MCF 10A (cell line): ENCODE measurements at regions of chr7 and their contacts with region 1.

Region 1: DNA sequence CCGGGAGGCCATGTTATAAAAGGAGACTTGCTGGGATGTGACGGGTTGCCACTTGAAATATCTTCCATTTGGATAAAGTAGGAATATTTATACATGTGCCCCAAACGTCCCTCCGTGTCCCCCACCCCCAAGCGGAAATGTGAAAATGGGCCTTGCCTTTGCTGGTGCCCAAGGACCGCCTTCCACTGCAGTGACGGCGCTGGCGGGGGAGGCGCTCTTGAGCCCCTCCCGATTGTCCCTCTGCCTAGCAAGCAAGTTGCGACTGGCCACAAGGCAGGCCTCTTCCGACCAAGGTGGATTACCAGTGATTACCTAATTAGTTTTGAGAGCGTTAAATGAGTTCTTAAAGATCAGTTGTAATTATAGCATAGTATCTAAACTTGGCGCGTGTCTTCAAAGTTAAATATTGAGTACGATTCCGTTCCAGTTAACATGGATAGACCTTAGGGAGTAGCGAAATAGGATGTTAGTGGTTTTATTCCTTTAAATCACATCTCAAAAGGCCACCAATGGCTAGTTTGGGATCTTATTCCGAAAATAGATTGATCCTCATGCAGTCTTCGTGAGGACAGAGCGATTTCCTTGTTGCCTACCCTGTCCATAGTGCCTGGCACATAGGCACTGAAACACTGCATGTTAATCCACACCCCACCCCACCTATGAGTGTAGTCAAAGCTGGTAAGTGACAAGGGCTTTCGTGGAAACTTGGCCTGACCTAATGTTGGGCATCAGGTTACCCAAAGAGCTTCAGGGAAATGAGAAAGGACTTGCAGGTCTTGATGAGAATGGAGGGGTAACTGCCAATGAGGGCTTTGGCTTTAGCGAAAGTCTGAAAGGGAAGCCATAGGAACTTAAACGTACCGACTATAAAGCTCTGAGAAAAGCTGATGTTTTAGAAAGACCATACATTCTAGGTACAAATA is 1.1 kb downstream of the PPIA start:
- DNase-seq: peak; percentile 90
- H3K4me3 Mint-ChIP-seq: peak overlapping the region; percentile 87
- H3K27ac Mint-ChIP-seq: peak overlapping the region; percentile 98
- H3K4me1 Mint-ChIP-seq: peaks cover 6% of the 10 kb centered on the region
- H3K27me3 Mint-ChIP-seq: no peaks in the 10 kb centered on the region
- CTCF ChIP-seq: peak; percentile 42

Region 2: DNA sequence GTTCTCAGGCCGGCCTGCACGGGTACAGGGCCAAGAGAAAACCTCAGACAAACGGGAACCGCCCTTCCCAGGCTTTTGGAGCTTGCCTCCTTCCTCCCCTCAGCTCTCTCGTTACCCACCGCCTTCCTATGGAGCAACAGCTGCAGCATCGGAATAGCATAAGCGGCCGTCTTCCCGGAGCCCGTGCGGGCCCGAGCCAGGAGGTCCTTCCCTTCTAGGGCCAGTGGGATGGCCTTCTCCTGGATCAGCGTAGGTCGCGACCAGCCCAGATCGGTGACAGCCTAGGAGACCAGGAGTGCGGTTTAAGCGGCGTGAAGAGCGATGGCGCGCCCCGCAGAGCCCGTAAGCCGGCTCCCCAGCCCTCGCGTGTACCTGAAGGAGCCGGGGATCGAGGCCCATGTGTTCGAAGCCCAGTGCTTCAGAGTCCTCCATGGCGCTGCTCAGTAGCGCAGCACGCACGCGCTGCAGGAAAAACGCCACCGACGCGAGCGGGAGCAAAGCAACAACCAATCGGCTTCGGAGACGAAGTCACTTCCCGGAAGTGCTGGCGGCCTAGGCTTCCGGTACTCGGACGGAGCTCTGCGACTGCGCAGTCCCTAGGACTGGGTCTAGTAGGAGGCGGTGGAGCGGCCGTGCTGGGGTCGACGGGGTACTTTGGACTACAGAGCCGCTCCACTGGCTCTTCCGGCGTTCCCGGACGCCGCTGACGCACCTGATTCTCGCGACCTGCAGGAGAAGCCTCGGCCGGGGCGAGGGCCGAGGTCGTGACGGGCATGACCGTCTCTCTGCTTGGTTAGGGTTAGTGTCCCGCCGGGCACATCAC is 223.9 kb before region 1 on chr7 and contains the start of gene DDX56:
- CTCF ChIA-PET with region 1: interaction called, 3 read pairs
- POLR2A ChIA-PET with region 1: interaction called, 11 read pairs
- intact Hi-C with region 1: no loop called
- DNase-seq: peak; percentile 94
- H3K4me3 Mint-ChIP-seq: peak within 1 kb of the TSS; percentile 98
- H3K27ac Mint-ChIP-seq: peak within 1 kb of the TSS; percentile 95
- H3K4me1 Mint-ChIP-seq: peaks cover 21% of the 10 kb centered on the region
- H3K27me3 Mint-ChIP-seq: no peaks in the 10 kb centered on the region
- CTCF ChIP-seq: no peak
- total RNA-seq, gene DDX56: 104 and 105 TPM in 2 replicates

Region 3: DNA sequence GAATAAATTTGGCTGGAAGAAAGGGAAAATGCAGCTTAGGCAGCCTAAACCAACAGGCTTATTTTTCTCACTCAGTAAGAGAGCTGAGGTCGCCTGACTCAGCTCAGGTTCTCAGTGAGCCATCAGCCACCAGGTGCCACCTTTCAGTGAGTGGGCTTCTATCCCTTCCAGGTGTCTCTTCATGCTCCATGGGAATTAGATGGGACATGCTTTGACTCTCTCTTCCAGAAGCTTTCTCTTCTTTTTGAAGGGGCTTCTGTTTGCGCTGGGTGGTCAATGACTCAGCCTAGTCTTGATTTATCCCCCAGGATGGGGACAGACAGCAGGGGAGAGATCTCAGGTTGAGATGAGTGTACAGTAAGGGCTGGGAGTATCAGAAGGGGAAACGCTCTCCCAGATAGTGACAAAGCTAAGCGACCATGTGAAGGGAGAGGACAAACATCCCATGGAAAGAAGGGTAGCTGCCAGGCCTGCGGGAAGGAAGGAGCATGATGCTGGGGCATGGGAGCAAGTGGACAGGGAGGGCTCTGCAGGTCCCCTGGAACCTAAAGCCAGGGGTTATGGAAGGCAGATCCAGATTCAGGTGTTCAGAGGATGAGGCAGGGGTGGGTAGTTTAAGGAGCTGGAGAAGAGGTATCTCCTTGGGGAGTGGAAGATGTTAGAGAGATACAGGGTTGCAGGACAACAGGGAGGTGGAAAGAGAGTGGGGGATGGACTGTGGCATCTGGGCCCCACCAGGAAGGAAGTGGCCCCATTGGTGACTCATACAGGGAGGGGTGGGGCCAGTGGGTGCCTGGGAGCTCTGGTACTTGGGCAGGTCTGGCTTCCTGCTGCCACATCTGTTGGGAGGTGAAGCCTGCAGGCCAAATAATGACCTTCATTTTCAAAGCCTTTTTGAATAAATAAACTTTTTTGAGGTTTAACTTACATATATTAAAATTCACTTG is 158.7 kb before region 1 on chr7:
- CTCF ChIA-PET with region 1: interaction called, 3 read pairs
- POLR2A ChIA-PET with region 1: interaction called, 19 read pairs
- intact Hi-C with region 1: no loop called
- DNase-seq: peak; percentile 90
- H3K4me3 Mint-ChIP-seq: peak overlapping the region; percentile 59
- H3K27ac Mint-ChIP-seq: peak overlapping the region; percentile 98
- H3K4me1 Mint-ChIP-seq: peaks cover 48% of the 10 kb centered on the region
- H3K27me3 Mint-ChIP-seq: no peaks in the 10 kb centered on the region
- CTCF ChIP-seq: no peak

Region 4: DNA sequence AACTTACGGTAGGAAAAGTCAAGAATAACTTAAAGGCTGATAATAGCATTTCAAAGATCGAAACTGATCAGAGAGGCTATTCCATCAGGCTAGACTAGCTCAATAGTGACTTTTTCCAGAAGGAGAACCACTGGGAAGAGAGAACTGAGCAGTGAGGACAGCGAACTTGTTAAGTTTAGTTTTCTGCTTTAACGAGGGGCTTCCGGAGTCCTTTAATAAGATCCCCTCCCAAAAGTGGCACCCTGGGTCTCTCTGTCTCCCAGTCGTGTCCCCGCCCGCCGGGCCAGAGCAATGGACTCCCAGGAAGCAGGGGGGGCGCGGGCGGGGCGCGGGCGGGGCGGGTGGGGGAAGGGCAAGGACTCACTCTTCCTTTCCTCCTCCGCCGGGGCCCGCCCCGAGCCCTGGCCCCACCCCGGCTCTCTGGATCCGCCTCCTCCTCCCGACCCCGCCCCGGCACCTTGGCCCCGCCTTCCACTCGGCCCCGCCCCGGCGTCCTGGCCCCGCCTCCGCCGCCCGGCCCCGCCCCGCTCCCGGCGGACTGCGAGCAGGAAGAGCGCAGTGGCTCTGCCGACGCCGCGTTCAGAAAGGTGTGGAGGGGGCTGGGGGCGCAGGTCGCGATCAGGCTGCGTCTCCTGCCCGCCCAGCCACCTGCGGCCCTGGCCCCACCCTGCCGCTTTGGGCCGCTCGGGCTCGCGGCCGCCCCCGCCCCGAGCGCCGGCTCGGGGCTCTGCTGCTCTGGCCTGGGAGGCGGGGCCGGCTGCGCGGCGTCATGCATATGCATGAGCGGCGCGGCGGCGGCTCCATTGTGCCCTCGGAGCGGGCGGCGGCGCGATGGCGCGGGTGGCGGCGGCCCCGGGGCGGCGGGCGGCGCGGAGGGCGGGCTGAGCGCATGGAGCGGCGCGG is 49.3 kb before region 1 on chr7 and contains the start of gene ZMIZ2:
- CTCF ChIA-PET with region 1: interaction called, 4 read pairs
- POLR2A ChIA-PET with region 1: interaction called, 14 read pairs
- intact Hi-C with region 1: loop called (anchors 10 kb)
- DNase-seq: peak; percentile 84
- H3K4me3 Mint-ChIP-seq: peak within 1 kb of the TSS; percentile 74
- H3K27ac Mint-ChIP-seq: peak within 1 kb of the TSS; percentile 29
- H3K4me1 Mint-ChIP-seq: peaks cover 26% of the 10 kb centered on the region
- H3K27me3 Mint-ChIP-seq: no peaks in the 10 kb centered on the region
- CTCF ChIP-seq: no peak
- total RNA-seq, gene ZMIZ2: 94.4 and 100 TPM in 2 replicates

Region 5: GRCh38 chr7:45111298-45112223 is 314.0 kb after region 1 on chr7 and contains the start of gene TBRG4:
- CTCF ChIA-PET with region 1: no interaction called
- POLR2A ChIA-PET with region 1: interaction called, 11 read pairs
- intact Hi-C with region 1: no loop called
- DNase-seq: peak; percentile 94
- H3K4me3 Mint-ChIP-seq: peak within 1 kb of the TSS; percentile 91
- H3K27ac Mint-ChIP-seq: peak within 1 kb of the TSS; percentile 97
- H3K4me1 Mint-ChIP-seq: peaks cover 19% of the 10 kb centered on the region
- H3K27me3 Mint-ChIP-seq: no peaks in the 10 kb centered on the region
- CTCF ChIP-seq: no peak
- total RNA-seq, gene TBRG4: 77.2 and 85.7 TPM in 2 replicates